ENCODE measurements at regions of chr2 and their contacts with region 1.

Region 1: DNA sequence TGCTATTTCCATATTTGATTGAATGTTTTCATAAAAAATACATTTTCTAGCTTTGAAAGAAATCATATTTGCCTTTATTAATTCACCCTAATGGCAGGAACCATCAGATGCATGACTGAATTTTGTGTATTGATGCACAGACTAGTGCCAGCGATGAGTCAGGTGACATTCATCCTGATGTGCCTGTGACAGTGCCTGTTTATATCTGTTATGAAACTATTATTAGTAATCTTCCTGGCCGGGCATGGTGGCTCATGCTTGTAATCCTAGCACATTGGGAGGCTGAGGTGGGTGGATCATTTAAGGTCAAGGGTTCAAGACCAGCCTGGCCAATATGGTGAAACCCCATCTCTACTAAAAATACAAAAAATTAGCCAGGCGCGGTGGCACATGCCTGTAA is 170.0 kb downstream of the TSN start:
- DNase-seq: no peak
- ATAC-seq: no peak
- H3K4me3 ChIP-seq: no peak overlapping the region
- H3K4me3 Mint-ChIP-seq: no peak overlapping the region
- H3K27ac ChIP-seq: no peak overlapping the region
- H3K27ac Mint-ChIP-seq: no peak overlapping the region
- H3K4me1 ChIP-seq: no peaks in the 10 kb centered on the region
- H3K4me1 Mint-ChIP-seq: no peaks in the 10 kb centered on the region
- H3K27me3 ChIP-seq: no peaks in the 10 kb centered on the region
- H3K27me3 Mint-ChIP-seq: no peaks in the 10 kb centered on the region
- CTCF ChIP-seq: no peak

Region 2: GRCh38 chr2:121400201-121400600 is 525.3 kb before region 1 on chr2:
- CTCF ChIA-PET with region 1: no interaction called
- POLR2A ChIA-PET with region 1: no interaction called
- intact Hi-C with region 1: loop called in 1 of 2 experiments (anchors 5 kb)
- DNase-seq: no peak
- ATAC-seq: no peak
- H3K4me3 ChIP-seq: no peak overlapping the region
- H3K4me3 Mint-ChIP-seq: no peak overlapping the region
- H3K27ac ChIP-seq: no peak overlapping the region
- H3K27ac Mint-ChIP-seq: no peak overlapping the region
- H3K4me1 ChIP-seq: no peaks in the 10 kb centered on the region
- H3K4me1 Mint-ChIP-seq: peaks cover 2% of the 10 kb centered on the region
- H3K27me3 ChIP-seq: no peaks in the 10 kb centered on the region
- H3K27me3 Mint-ChIP-seq: no peaks in the 10 kb centered on the region
- CTCF ChIP-seq: no peak

Region 3: GRCh38 chr2:121596221-121597080 is 329.0 kb before region 1 on chr2:
- CTCF ChIA-PET with region 1: no interaction called
- POLR2A ChIA-PET with region 1: no interaction called
- intact Hi-C with region 1: no loop called
- DNase-seq: peak in 2 of 9 experiments; percentile 18 to 39
- ATAC-seq: peak; percentile 65
- H3K4me3 ChIP-seq: no peak overlapping the region
- H3K4me3 Mint-ChIP-seq: peak overlapping the region; percentile 54
- H3K27ac ChIP-seq: peak overlapping the region in 1 of 2 experiments; percentile 55
- H3K27ac Mint-ChIP-seq: peak overlapping the region; percentile 78
- H3K4me1 ChIP-seq: peaks cover 31% of the 10 kb centered on the region
- H3K4me1 Mint-ChIP-seq: peaks cover 60% of the 10 kb centered on the region
- H3K27me3 ChIP-seq: no peaks in the 10 kb centered on the region
- H3K27me3 Mint-ChIP-seq: no peaks in the 10 kb centered on the region
- CTCF ChIP-seq: no peak

Region 4: DNA sequence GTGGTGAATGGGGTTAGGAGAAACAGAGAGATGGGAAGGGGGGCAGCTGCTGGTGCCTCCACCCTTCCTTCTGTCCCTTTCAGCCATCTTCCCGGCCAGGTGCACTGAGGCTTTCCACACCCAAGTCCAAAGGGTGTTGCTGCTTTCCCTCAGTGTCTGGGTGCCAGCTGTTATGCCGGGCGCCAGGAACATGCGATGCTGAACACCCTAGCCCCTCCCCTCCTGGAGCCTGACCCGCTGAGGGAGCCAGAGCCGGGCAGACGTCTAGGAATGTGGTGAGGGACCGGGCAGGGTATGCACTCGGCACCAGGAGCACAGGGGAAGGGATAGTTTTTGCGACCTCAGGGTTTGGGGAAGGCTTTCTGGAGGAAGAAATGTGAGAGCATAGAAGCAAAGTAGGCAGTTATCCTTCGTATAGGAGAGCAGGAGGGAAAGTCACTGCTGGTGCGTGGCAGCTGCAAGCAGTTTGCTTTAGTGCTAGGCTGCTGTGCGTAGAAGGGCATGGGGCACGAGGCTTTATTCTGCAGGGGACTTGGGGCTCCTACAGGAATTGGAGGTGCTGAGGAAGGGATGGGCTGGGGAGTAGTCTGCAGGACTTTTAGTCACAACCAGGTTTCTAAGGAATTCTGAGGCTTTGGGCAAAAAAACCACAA is 22.3 kb before region 1 on chr2:
- CTCF ChIA-PET with region 1: no interaction called
- POLR2A ChIA-PET with region 1: no interaction called
- intact Hi-C with region 1: no loop called
- DNase-seq: no peak
- ATAC-seq: no peak
- H3K4me3 ChIP-seq: no peak overlapping the region
- H3K4me3 Mint-ChIP-seq: no peak overlapping the region
- H3K27ac ChIP-seq: no peak overlapping the region
- H3K27ac Mint-ChIP-seq: no peak overlapping the region
- H3K4me1 ChIP-seq: no peaks in the 10 kb centered on the region
- H3K4me1 Mint-ChIP-seq: no peaks in the 10 kb centered on the region
- H3K27me3 ChIP-seq: no peaks in the 10 kb centered on the region
- H3K27me3 Mint-ChIP-seq: peaks cover 3% of the 10 kb centered on the region
- CTCF ChIP-seq: no peak

Measured in CD8-positive, alpha-beta T cell (primary cell).